OCI-LY7 (cell line): ENCODE measurements at regions of chr6 and their contacts with region 1.

Region 1: DNA sequence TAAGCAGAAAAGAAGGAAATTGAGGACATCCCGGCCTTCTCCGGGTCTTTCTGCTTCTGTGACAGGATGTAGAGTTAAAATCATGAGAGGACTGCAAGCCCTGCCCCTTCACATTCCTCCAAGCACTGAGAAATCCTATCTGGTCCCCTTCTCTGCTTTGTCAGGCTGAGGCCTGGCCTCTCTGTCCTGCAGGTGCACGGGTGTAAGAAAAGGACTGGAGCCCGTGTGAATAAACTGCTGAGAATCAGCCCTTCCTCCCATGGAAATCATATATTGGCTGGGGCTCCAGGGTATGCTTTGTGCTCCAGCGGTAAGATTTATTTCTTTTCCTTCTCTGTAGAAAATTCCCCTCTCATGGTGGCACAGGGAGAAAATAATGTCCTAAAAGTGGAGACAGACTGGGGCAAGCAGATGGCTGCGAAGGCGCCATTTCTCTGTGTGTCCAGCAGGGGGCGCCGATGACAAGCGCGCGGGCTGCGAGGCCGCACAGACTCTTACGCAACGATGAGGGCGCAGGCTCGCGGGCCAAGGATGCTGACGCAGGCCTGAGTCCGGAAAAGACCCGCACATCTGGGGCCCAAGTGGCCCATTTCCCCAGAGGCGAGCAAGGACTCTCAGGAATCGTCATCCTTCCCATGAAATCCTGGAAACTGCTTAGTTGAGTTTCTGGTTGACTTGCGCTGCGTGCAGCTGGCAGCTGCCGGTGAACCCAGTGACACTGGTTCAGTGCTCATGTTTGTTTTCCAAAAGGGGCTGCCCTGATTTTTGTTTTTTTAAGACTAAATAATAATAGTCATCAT is 258.6 kb downstream of the ADGB start:
- DNase-seq: peak; percentile 46
- H3K4me3 ChIP-seq: no peak overlapping the region
- H3K27ac ChIP-seq: no peak overlapping the region
- H3K4me1 ChIP-seq: no peaks in the 10 kb centered on the region
- CTCF ChIP-seq: peak; percentile 98

Region 2: GRCh38 chr6:147285087-147285855 is 427.9 kb after region 1 on chr6:
- CTCF ChIA-PET with region 1: no interaction called
- POLR2A ChIA-PET with region 1: interaction called, 3 read pairs
- intact Hi-C with region 1: loop called (anchors 1 kb)
- DNase-seq: peak; percentile 40
- H3K4me3 ChIP-seq: no peak overlapping the region
- H3K27ac ChIP-seq: no peak overlapping the region
- H3K4me1 ChIP-seq: no peaks in the 10 kb centered on the region
- CTCF ChIP-seq: peak; percentile 83